ENCODE measurements at regions of chr11 and their contacts with region 1.

Region 1: GRCh38 chr11:118198370-118198769 is 21.9 kb upstream of the SCN2B start:
- DNase-seq: peak; percentile 65 to 88 (median 79)
- H3K4me3 ChIP-seq: no peak overlapping the region
- H3K4me3 Mint-ChIP-seq: peak overlapping the region in 4 of 7 donors; percentile 41 to 60 (median 52)
- H3K27ac ChIP-seq: no peak overlapping the region
- H3K27ac Mint-ChIP-seq: peak overlapping the region; percentile 68 to 90 (median 79)
- H3K4me1 ChIP-seq: peaks cover 41% of the 10 kb centered on the region
- H3K4me1 Mint-ChIP-seq: peaks cover 12 to 18% (median 12%) of the 10 kb centered on the region in 3 donors
- H3K27me3 ChIP-seq: no peaks in the 10 kb centered on the region
- H3K27me3 Mint-ChIP-seq: peaks cover 0 to 1% of the 10 kb centered on the region in 2 donors

Region 2: DNA sequence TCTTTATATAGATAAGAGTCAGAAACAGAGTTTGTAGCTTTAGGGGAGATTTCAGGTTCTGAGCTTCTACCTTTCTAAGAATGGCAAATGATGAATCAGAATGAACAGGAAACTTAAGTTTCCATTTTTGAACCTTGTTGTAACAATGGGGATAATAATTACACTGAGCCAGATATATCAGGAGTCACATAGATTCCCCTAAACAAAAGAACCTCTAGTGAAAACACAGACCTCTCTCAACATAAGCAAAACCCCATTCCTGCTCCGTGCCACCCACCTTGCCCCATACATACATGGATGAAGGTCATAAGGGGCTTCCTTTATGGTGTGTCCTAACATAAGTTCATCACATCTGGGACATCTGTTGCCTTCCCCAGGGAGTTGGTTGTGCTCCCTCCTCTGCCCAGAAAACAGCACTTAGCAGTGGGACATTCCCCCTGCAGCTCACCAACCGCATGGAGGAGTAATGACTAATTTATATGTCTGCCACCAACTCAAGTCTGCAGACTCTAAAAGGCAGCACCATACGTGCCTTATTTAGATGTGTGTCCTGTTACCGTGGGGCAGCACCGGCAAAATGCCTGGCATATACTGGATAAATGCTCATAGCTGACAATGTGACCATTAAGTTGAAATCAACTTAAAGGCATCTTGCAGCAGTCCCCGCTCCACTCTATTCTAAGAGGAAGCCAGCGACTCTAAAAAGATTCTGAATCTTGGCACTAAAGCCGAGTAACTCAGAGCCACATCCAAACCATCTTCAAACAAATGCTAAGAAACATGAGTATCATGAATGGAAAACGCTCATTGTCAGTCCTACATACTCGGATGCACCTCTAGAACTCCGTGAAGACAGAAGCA is 18.5 kb after region 1 on chr11:
- CTCF ChIA-PET with region 1: interaction called, 46 read pairs
- POLR2A ChIA-PET with region 1: interaction called, 9 read pairs
- DNase-seq: peak in 3 of 5 donors; percentile 34 to 67 (median 44)
- H3K4me3 ChIP-seq: peak overlapping the region; percentile 44
- H3K4me3 Mint-ChIP-seq: peak overlapping the region; percentile 84 to 94 (median 90)
- H3K27ac ChIP-seq: peak overlapping the region; percentile 10
- H3K27ac Mint-ChIP-seq: peak overlapping the region in 7 of 8 donors; percentile 76 to 98 (median 95)
- H3K4me1 ChIP-seq: peaks cover 97% of the 10 kb centered on the region
- H3K4me1 Mint-ChIP-seq: peaks cover 0 to 100% (median 92%) of the 10 kb centered on the region in 3 donors
- H3K27me3 ChIP-seq: no peaks in the 10 kb centered on the region
- H3K27me3 Mint-ChIP-seq: no peaks in the 10 kb centered on the region

Region 3: GRCh38 chr11:118240999-118241768 is 42.8 kb after region 1 on chr11:
- CTCF ChIA-PET with region 1: interaction called, 18 read pairs
- POLR2A ChIA-PET with region 1: interaction called, 9 read pairs
- DNase-seq: peak; percentile 36 to 82 (median 45)
- H3K4me3 ChIP-seq: peak overlapping the region; percentile 22
- H3K4me3 Mint-ChIP-seq: peak overlapping the region; percentile 51 to 87 (median 75)
- H3K27ac ChIP-seq: peak overlapping the region; percentile 64
- H3K27ac Mint-ChIP-seq: peak overlapping the region; percentile 88 to 96 (median 94)
- H3K4me1 ChIP-seq: peaks cover 50% of the 10 kb centered on the region
- H3K4me1 Mint-ChIP-seq: peaks cover 72 to 97% (median 90%) of the 10 kb centered on the region in 3 donors
- H3K27me3 ChIP-seq: no peaks in the 10 kb centered on the region
- H3K27me3 Mint-ChIP-seq: peaks cover 0 to 2% of the 10 kb centered on the region in 2 donors

Region 4: DNA sequence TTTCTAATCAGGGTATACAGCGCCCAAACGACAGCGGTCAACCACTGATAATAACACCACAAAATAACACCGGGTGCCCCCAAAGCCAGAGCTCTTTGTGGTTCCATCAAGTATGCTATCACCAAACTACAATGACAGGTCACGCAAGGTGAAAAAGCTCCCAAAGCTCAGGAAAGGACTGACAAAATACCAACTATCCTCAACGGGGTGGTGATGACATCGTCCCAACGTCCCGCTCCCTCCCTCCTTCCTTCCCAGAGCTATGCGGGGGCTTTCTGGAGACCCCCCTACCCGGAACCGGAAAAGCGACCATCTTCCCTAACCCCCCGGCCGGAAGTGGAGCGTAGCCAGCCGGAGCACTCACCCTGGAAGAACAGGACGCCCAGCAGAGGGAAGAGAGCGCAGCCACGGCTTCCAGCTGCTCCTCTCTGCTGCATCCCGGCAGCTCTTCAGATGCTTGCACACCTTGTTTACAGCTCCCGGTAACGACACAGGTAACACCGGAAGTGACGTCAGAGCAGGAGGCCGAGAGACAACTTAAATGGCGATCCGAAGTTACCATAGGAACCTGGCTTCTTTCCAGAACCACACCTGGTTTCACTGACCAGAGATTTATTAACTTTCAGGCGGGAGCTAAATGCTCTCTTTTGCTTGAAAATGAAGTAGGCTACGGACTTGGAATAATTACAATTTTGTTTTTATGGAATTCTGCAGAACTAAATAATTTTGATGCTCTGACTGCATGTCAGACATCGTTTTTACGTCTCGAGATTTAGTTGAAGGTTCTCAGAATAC is 53.7 kb after region 1 on chr11 and contains the start of gene MPZL3:
- CTCF ChIA-PET with region 1: interaction called, 18 read pairs
- POLR2A ChIA-PET with region 1: interaction called, 10 read pairs
- DNase-seq: peak; percentile 69 to 93 (median 90)
- H3K4me3 ChIP-seq: peak within 1 kb of the TSS; percentile 90
- H3K4me3 Mint-ChIP-seq: peak within 1 kb of the TSS; percentile 97 to 99 (median 98)
- H3K27ac ChIP-seq: peak within 1 kb of the TSS; percentile 98
- H3K27ac Mint-ChIP-seq: peak within 1 kb of the TSS; percentile 98 to 100 (median 99)
- H3K4me1 ChIP-seq: peaks cover 27% of the 10 kb centered on the region
- H3K4me1 Mint-ChIP-seq: peaks cover 43 to 51% (median 50%) of the 10 kb centered on the region in 3 donors
- H3K27me3 ChIP-seq: no peaks in the 10 kb centered on the region
- H3K27me3 Mint-ChIP-seq: peaks cover 0 to 3% of the 10 kb centered on the region in 2 donors
- total RNA-seq, gene MPZL3: 113 to 119 TPM

Region 5: GRCh38 chr11:118263695-118264567 is 65.6 kb after region 1 on chr11 and contains the start of gene MPZL2:
- CTCF ChIA-PET with region 1: interaction called, 18 read pairs
- POLR2A ChIA-PET with region 1: interaction called, 4 read pairs
- DNase-seq: peak in 1 of 5 donors; percentile 39
- H3K4me3 ChIP-seq: peak within 1 kb of the TSS; percentile 8
- H3K4me3 Mint-ChIP-seq: peak within 1 kb of the TSS; percentile 45 to 84 (median 74)
- H3K27ac ChIP-seq: no peak within 1 kb of the TSS
- H3K27ac Mint-ChIP-seq: peak within 1 kb of the TSS in 6 of 8 donors; percentile 3 to 73 (median 62)
- H3K4me1 ChIP-seq: peaks cover 8% of the 10 kb centered on the region
- H3K4me1 Mint-ChIP-seq: peaks cover 23 to 36% (median 33%) of the 10 kb centered on the region in 3 donors
- H3K27me3 ChIP-seq: no peaks in the 10 kb centered on the region
- H3K27me3 Mint-ChIP-seq: peaks cover 6 to 17% of the 10 kb centered on the region in 2 donors
- total RNA-seq, gene MPZL2: 4.5 to 5.5 TPM

Region 6: DNA sequence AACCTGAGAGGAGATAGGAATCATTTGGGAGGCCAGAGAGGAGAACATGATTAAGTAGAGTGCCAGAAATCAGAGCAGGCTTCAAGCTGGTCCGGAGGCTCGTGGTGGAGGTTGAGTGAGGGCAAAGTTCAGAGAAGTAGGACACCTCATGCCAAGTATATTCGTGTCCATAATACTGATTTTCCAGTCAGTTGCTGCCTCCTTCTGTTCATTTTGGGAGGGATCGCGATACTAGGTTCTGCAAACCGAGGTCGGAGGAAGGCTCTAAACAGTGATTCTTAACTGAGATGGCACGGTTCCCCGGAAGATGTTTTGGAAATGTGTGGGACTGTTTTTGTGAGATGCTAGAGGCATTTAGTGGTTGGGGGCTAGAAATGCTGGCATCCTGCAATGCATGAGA is 92.6 kb after region 1 on chr11:
- CTCF ChIA-PET with region 1: interaction called, 25 read pairs
- POLR2A ChIA-PET with region 1: interaction called, 11 read pairs
- DNase-seq: peak in 3 of 5 donors; percentile 46 to 55 (median 46)
- H3K4me3 ChIP-seq: no peak overlapping the region
- H3K4me3 Mint-ChIP-seq: no peak overlapping the region
- H3K27ac ChIP-seq: no peak overlapping the region
- H3K27ac Mint-ChIP-seq: peak overlapping the region in 2 of 8 donors; percentile 34 to 87
- H3K4me1 ChIP-seq: peaks cover 7% of the 10 kb centered on the region
- H3K4me1 Mint-ChIP-seq: peaks cover 9 to 14% (median 12%) of the 10 kb centered on the region in 3 donors
- H3K27me3 ChIP-seq: no peaks in the 10 kb centered on the region
- H3K27me3 Mint-ChIP-seq: no peaks in the 10 kb centered on the region

Region 7: GRCh38 chr11:118353084-118353710 is 154.8 kb after region 1 on chr11:
- CTCF ChIA-PET with region 1: interaction called, 13 read pairs
- POLR2A ChIA-PET with region 1: interaction called, 6 read pairs
- DNase-seq: peak in 2 of 5 donors; percentile 53 to 68
- H3K4me3 ChIP-seq: no peak overlapping the region
- H3K4me3 Mint-ChIP-seq: no peak overlapping the region
- H3K27ac ChIP-seq: no peak overlapping the region
- H3K27ac Mint-ChIP-seq: peak overlapping the region; percentile 83 to 97 (median 92)
- H3K4me1 ChIP-seq: peaks cover 23% of the 10 kb centered on the region
- H3K4me1 Mint-ChIP-seq: peaks cover 21 to 45% (median 38%) of the 10 kb centered on the region in 3 donors
- H3K27me3 ChIP-seq: no peaks in the 10 kb centered on the region
- H3K27me3 Mint-ChIP-seq: no peaks in the 10 kb centered on the region

Measured in CD8-positive, alpha-beta memory T cell (primary cell).